Naive thymus-derived CD4-positive, alpha-beta T cell (primary cell): ENCODE measurements at regions of chr19 and their contacts with region 1.

Region 1: GRCh38 chr19:47047763-47048405 is 540 bp downstream of the TMEM160 start:
- DNase-seq: peak; percentile 41 to 80 (median 58)
- ATAC-seq: peak; percentile 57
- H3K4me3 ChIP-seq: peak overlapping the region; percentile 86
- H3K4me3 Mint-ChIP-seq: peak overlapping the region; percentile 89 to 100 (median 97)
- H3K27ac ChIP-seq: peak overlapping the region; percentile 79
- H3K27ac Mint-ChIP-seq: peak overlapping the region; percentile 82 to 96 (median 93)
- H3K4me1 ChIP-seq: peaks cover 6 to 7% of the 10 kb centered on the region in 2 donors
- H3K4me1 Mint-ChIP-seq: peaks cover 10 to 22% (median 16%) of the 10 kb centered on the region in 7 donors
- H3K27me3 ChIP-seq: no peaks in the 10 kb centered on the region
- H3K27me3 Mint-ChIP-seq: peaks cover 0 to 2% (median 0%) of the 10 kb centered on the region in 5 donors

Region 2: DNA sequence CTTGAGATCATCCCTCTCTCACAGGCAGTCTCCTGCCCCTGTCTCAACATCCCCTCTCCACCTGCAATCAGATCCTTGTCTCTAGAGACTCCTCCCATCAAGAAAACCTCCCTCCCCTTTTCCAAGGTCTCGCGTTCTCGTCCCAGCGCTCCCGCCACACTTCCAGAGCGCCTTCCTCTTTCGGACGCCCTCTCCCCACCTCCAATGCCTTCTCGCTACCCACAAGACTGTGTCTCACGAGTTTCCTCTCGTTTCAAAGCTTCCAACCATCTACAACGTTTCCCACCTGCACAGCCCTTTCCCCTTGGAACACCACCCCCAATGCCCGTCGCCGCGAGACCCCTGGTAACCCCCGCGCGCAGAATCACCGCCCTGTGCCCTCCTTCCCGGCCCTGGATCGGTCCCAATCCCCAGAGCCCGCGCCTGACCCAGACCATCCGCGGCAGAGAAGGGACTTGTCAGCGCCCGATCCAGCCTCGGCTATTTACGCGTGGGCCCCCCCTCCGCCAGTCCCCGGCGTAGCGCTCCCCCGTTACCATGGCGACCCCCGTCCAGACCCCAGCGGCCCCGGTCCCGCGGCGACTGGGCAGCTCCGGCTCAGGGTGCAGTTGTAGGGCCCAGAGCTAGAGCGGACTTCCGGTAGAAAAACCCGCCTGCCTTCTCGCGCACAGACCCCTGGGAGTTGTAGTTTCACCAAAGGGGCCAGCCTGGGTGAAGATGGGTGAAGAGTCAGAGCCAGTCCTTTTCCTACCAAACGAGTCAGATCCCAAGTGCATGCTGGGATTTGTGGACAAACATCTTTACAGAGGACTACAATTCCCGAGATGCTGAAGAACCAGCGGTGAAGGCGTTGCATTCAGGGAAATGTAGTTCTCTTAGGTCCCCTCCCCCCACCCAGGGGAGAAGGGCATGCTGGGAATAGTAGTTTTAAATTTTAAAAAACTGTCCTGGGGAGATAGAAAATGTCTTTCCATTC is 197.4 kb before region 1 on chr19 and contains the start of gene AP2S1:
- CTCF ChIA-PET with region 1: no interaction called
- POLR2A ChIA-PET with region 1: no interaction called
- intact Hi-C with region 1: loop called (anchors 1 kb)
- DNase-seq: peak; percentile 73 to 98 (median 93)
- ATAC-seq: peak; percentile 97
- H3K4me3 ChIP-seq: peak within 1 kb of the TSS; percentile 89
- H3K4me3 Mint-ChIP-seq: peak within 1 kb of the TSS; percentile 87 to 99 (median 93)
- H3K27ac ChIP-seq: peak within 1 kb of the TSS; percentile 79
- H3K27ac Mint-ChIP-seq: peak within 1 kb of the TSS; percentile 68 to 96 (median 83)
- H3K4me1 ChIP-seq: peaks cover 9 to 12% of the 10 kb centered on the region in 2 donors
- H3K4me1 Mint-ChIP-seq: peaks cover 20 to 34% (median 29%) of the 10 kb centered on the region in 7 donors
- H3K27me3 ChIP-seq: no peaks in the 10 kb centered on the region
- H3K27me3 Mint-ChIP-seq: peaks cover 0 to 3% (median 0%) of the 10 kb centered on the region in 5 donors
- total RNA-seq, gene AP2S1: 34.4 to 116 (median 46.5) TPM

Region 3: DNA sequence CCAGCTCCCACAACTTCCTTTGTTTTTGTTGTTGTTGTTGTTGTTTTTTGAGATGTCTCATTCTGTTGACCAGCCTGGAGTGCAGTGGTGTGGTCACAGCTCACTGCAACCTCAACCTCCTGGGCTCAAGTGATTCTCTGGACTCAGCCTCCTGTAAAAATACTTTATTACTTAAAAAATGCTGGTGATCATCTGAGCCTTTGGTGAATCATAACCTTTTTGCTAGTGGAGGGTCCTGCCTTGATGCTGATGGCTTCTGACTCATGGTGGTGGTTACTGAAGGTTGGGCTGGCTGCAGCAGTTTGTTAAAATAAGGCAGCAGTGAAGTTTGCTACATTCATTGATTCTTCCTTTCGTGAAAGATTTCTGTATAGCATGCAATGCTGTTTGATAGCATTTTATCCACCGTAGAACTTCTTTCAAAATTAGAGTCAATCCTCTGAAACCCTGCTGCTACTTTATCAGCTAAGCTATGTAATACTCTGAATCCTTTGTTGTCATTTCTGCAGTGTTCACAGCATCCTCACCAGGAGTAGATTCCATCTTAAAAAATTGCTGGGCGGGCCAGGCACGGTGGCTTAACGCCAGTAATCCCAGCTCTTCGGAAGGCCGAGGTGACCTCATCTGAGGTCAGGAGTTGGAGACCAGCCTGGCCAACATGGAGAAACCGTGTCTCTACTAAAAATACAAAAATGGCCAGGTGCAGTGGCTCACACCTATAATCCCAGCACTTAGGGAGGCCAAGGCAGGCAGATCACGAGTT is 169.1 kb before region 1 on chr19:
- CTCF ChIA-PET with region 1: no interaction called
- POLR2A ChIA-PET with region 1: no interaction called
- intact Hi-C with region 1: no loop called
- DNase-seq: no peak
- ATAC-seq: no peak
- H3K4me3 ChIP-seq: no peak overlapping the region
- H3K4me3 Mint-ChIP-seq: no peak overlapping the region
- H3K27ac ChIP-seq: no peak overlapping the region
- H3K27ac Mint-ChIP-seq: peak overlapping the region in 1 of 9 donors; percentile 25
- H3K4me1 ChIP-seq: no peaks in the 10 kb centered on the region
- H3K4me1 Mint-ChIP-seq: peaks cover 0 to 16% (median 5%) of the 10 kb centered on the region in 7 donors
- H3K27me3 ChIP-seq: no peaks in the 10 kb centered on the region
- H3K27me3 Mint-ChIP-seq: no peaks in the 10 kb centered on the region

Region 4: DNA sequence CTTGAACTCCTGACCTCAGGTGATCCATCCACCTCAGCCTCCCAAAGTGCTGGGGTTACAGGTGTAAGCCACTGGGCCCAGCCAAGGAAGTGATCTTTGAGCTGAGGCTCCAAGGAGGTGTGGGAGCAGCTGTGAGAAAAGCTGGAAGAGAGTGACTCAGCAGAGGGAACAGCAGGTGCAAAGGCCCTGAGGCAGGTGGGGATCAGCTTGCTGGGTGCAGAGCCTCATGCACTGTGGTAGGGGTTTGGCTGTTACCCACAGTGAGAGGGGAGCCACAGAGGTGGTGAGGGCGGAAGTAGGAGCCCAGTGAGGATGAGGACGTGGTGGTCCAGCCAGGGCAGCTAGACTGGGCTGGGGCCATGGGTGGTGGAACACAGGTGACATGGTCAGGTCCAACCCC is 21.7 kb before region 1 on chr19:
- CTCF ChIA-PET with region 1: no interaction called
- POLR2A ChIA-PET with region 1: no interaction called
- intact Hi-C with region 1: no loop called
- DNase-seq: no peak
- ATAC-seq: no peak
- H3K4me3 ChIP-seq: no peak overlapping the region
- H3K4me3 Mint-ChIP-seq: no peak overlapping the region
- H3K27ac ChIP-seq: no peak overlapping the region
- H3K27ac Mint-ChIP-seq: no peak overlapping the region
- H3K4me1 ChIP-seq: peaks cover under 1 to 17% of the 10 kb centered on the region in 2 donors
- H3K4me1 Mint-ChIP-seq: peaks cover 0 to 10% (median 8%) of the 10 kb centered on the region in 7 donors
- H3K27me3 ChIP-seq: peaks cover 0 to 22% of the 10 kb centered on the region in 2 donors
- H3K27me3 Mint-ChIP-seq: peaks cover 49 to 84% (median 68%) of the 10 kb centered on the region in 5 donors

Region 5: GRCh38 chr19:47094557-47095475 is 46.9 kb after region 1 on chr19:
- CTCF ChIA-PET with region 1: no interaction called
- POLR2A ChIA-PET with region 1: interaction called, 3 read pairs
- intact Hi-C with region 1: loop called in 1 of 2 experiments (anchors 1 kb)
- DNase-seq: peak in 5 of 9 donors; percentile 15 to 67 (median 23)
- ATAC-seq: peak; percentile 74
- H3K4me3 ChIP-seq: peak overlapping the region; percentile 28
- H3K4me3 Mint-ChIP-seq: peak overlapping the region in 8 of 10 donors; percentile 16 to 93 (median 62)
- H3K27ac ChIP-seq: peak overlapping the region; percentile 64
- H3K27ac Mint-ChIP-seq: peak overlapping the region; percentile 82 to 99 (median 92)
- H3K4me1 ChIP-seq: peaks cover 19 to 21% of the 10 kb centered on the region in 2 donors
- H3K4me1 Mint-ChIP-seq: peaks cover 36 to 77% (median 43%) of the 10 kb centered on the region in 7 donors
- H3K27me3 ChIP-seq: no peaks in the 10 kb centered on the region
- H3K27me3 Mint-ChIP-seq: no peaks in the 10 kb centered on the region

Region 6: GRCh38 chr19:47348819-47349795 is 301.2 kb after region 1 on chr19 and contains the start of gene DHX34:
- CTCF ChIA-PET with region 1: no interaction called
- POLR2A ChIA-PET with region 1: no interaction called
- intact Hi-C with region 1: loop called in 1 of 2 experiments (anchors 1 kb)
- DNase-seq: peak; percentile 97 to 100 (median 99)
- ATAC-seq: peak; percentile 100
- H3K4me3 ChIP-seq: peak within 1 kb of the TSS; percentile 92
- H3K4me3 Mint-ChIP-seq: peak within 1 kb of the TSS; percentile 91 to 100 (median 97)
- H3K27ac ChIP-seq: peak within 1 kb of the TSS; percentile 83
- H3K27ac Mint-ChIP-seq: peak within 1 kb of the TSS; percentile 88 to 97 (median 95)
- H3K4me1 ChIP-seq: peaks cover 0 to 12% of the 10 kb centered on the region in 2 donors
- H3K4me1 Mint-ChIP-seq: peaks cover 19 to 46% (median 44%) of the 10 kb centered on the region in 7 donors
- H3K27me3 ChIP-seq: no peaks in the 10 kb centered on the region
- H3K27me3 Mint-ChIP-seq: peaks cover 0 to 3% (median 0%) of the 10 kb centered on the region in 5 donors
- total RNA-seq, gene DHX34: 15.6 to 31.6 (median 29.5) TPM

Region 7: DNA sequence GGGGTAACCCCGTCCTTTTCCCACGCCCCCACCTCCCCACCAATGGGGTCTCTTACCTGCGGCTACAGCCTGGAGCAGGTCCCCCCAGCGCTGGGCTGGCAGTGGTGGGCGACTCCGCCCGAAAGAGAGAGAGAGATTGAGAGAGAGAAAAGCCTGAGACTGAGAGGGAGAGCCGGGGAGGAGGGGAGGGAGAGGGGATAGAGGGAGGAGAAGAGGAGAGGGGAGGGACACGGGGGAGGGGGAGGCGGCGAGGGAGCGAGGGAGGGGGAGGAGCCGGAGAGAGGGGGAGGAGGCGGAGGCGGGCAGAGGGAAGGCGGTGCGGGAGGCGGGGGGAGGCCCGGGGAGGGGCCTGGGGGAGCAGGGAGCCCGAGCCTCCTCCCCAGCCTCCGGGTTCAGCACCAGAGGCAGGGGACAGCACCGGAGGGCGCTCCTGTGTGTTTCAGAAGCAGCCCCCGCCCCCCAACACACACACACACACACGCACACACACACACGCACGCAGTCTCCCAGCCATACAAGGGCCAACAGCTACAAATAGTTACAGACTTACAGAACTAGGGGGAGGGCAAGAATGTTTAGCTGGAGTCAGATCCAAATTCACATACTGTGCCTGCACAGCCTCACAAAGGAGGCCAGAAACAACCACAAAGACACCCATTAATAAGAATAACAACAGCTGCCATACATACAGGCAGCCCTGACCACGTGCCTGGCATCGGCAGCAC is 424.0 kb after region 1 on chr19 and contains the start of gene SLC8A2:
- CTCF ChIA-PET with region 1: no interaction called
- POLR2A ChIA-PET with region 1: no interaction called
- intact Hi-C with region 1: no loop called
- DNase-seq: peak; percentile 42 to 84 (median 70)
- ATAC-seq: peak; percentile 93
- H3K4me3 ChIP-seq: no peak within 1 kb of the TSS
- H3K4me3 Mint-ChIP-seq: peak within 1 kb of the TSS in 9 of 10 donors; percentile 42 to 77 (median 67)
- H3K27ac ChIP-seq: no peak within 1 kb of the TSS
- H3K27ac Mint-ChIP-seq: peak within 1 kb of the TSS in 4 of 9 donors; percentile 25 to 80 (median 58)
- H3K4me1 ChIP-seq: no peaks in the 10 kb centered on the region
- H3K4me1 Mint-ChIP-seq: peaks cover 10 to 20% (median 17%) of the 10 kb centered on the region in 7 donors
- H3K27me3 ChIP-seq: peaks cover 6 to 7% of the 10 kb centered on the region in 2 donors
- H3K27me3 Mint-ChIP-seq: peaks cover 39 to 57% (median 48%) of the 10 kb centered on the region in 5 donors
- total RNA-seq, gene SLC8A2: 0.05 to 0.19 (median 0.19) TPM in 3 of 5 experiments, not detected in the others